Activated naive CD4-positive, alpha-beta T cell treated with anti-CD3 and anti-CD28 coated beads for 36 hours (primary cell): ENCODE measurements at regions of chr13 and their contacts with region 1.

Region 1: DNA sequence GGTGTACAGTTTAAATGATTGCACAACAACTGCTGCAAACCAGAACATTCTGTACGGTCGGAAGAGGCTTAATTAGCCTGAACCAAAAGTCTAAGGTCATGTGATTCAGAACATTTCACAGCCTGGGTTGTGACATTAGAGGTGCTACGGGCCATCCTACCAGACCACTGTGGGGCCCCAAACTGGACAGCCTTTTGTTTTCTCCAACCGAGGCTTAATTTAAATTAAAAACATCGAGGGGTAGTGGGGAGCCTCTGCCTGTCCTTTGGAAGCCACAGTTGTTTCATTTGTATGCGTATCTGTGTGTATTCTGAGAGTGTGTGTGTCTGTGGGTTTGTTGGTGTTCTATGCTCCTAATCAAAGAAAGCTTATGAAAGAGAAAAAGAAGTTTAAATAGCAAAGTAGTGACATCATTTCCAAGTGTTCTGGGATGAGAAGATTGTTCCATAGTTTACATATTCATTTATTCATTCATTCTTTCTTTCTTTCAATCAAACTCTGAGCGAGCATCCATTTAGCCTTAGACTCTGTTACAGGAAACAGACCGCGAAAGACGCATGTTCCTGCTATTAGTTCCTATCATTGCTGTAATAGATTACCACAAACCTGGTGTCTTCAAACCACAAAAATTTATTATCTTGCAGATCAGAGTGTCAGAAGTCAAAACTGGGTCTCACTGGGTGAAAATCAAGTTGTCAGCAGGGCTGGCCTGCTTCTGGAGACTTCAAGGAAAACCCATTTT is 444.8 kb downstream of the FOXO1 start:
- DNase-seq: peak; percentile 80
- H3K4me3 Mint-ChIP-seq: peak overlapping the region; percentile 25
- H3K27ac Mint-ChIP-seq: peak overlapping the region; percentile 92
- H3K4me1 Mint-ChIP-seq: peaks cover 69% of the 10 kb centered on the region
- H3K27me3 Mint-ChIP-seq: no peaks in the 10 kb centered on the region

Region 2: DNA sequence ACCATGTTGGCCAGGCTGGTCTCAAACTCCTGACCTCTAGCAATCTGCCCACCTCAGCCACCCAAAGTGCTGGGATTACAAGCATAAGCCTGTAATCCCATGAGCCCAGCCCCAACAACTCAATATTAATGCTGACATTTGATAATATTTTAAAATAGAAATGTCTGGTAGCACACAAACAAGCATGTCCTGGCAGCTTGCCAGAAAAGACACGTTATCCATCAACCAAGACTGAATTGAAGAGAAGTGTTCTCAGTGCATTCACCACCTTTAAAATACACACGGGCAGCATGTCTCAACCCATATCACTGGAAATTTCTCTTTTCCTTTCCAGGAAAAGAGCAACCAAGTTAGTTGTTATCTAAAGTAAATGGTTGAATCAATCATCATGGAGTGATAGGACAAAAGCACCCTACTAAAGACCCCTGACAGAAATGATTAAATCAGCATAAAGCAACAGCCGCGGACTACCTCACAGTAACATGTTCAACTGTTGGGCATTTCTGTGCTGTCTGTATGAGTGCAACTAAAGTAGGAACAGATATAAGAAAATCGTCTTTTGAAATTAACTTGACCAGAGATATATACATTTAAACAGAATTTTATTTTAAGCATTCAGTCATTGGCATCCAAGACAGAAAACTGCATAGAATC is 643.7 kb before region 1 on chr13:
- CTCF ChIA-PET with region 1: no interaction called
- intact Hi-C with region 1: no loop called
- DNase-seq: no peak
- H3K4me3 Mint-ChIP-seq: no peak overlapping the region
- H3K27ac Mint-ChIP-seq: no peak overlapping the region
- H3K4me1 Mint-ChIP-seq: no peaks in the 10 kb centered on the region
- H3K27me3 Mint-ChIP-seq: no peaks in the 10 kb centered on the region

Region 3: DNA sequence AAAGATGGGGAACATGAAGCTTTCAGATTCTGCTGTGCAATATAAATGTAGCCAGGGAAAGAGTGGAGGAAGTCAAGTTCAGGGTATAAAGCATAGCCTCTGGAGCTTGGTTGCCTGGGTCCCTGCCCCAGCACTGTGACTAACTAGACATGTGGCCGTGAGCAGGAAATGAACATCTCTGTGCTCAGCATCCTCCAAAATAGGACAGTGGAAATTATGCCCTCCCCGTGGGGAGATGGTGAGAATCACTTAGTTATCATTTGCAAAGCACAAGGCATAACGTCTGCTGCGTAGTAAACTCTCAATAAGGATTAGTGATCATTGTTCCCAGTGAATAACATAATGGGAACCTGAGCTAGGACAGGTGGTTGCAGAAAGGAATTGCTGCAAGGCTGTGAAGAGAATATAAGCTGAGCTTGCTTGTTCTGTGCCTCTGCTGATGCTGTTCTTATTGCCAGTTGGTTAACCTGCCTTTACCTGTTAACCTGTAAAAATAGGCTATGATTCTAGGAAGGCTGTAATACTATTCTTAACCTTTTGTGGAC is 125.2 kb before region 1 on chr13:
- CTCF ChIA-PET with region 1: no interaction called
- intact Hi-C with region 1: loop called (anchors 1 kb)
- DNase-seq: peak; percentile 75
- H3K4me3 Mint-ChIP-seq: no peak overlapping the region
- H3K27ac Mint-ChIP-seq: peak overlapping the region; percentile 20
- H3K4me1 Mint-ChIP-seq: peaks cover 30% of the 10 kb centered on the region
- H3K27me3 Mint-ChIP-seq: no peaks in the 10 kb centered on the region

Region 4: GRCh38 chr13:40149611-40150274 is 71.9 kb before region 1 on chr13:
- CTCF ChIA-PET with region 1: interaction called, 3 read pairs
- intact Hi-C with region 1: loop called (anchors 1 kb)
- DNase-seq: peak; percentile 37
- H3K4me3 Mint-ChIP-seq: no peak overlapping the region
- H3K27ac Mint-ChIP-seq: peak overlapping the region; percentile 52
- H3K4me1 Mint-ChIP-seq: peaks cover 73% of the 10 kb centered on the region
- H3K27me3 Mint-ChIP-seq: no peaks in the 10 kb centered on the region

Region 5: DNA sequence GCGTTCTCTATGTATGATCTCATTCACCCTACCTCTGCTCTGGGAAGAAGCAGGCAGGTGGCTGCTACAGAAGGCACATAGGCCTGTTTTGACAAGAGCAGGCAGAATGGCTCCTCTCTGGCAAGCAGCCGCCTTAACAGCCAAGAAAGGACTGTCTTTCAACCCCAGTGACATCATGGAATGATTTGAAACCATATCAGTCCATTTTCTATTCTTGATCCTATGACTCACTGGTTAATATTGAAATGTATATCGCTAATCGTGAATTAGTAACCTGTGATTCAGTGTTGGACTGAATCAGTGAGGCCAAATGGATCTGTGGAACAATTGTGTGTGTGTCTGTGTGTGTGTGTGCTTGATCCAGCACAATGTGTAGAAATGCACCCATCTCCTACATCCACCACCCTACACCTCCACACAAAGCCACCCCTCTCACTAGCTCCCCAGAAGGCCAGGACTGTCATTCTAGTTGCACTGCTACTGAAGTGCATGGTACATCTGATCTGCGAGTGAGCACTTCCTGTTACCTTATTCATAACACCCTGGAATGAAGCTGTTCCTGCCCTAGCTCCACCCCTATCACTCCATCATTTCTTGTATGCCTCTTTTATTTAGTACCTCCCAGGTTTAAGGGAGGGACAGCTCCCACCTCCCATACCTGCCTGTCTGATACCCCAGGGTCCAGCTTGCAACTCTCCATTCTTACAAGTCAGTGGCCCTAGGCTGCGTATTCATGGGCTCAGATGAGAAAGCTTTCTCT is 15.2 kb before region 1 on chr13:
- CTCF ChIA-PET with region 1: interaction called, 4 read pairs
- intact Hi-C with region 1: loop called (anchors 1 kb)
- DNase-seq: peak; percentile 74
- H3K4me3 Mint-ChIP-seq: peak overlapping the region; percentile 64
- H3K27ac Mint-ChIP-seq: peak overlapping the region; percentile 100
- H3K4me1 Mint-ChIP-seq: peaks cover 73% of the 10 kb centered on the region
- H3K27me3 Mint-ChIP-seq: no peaks in the 10 kb centered on the region

Region 6: DNA sequence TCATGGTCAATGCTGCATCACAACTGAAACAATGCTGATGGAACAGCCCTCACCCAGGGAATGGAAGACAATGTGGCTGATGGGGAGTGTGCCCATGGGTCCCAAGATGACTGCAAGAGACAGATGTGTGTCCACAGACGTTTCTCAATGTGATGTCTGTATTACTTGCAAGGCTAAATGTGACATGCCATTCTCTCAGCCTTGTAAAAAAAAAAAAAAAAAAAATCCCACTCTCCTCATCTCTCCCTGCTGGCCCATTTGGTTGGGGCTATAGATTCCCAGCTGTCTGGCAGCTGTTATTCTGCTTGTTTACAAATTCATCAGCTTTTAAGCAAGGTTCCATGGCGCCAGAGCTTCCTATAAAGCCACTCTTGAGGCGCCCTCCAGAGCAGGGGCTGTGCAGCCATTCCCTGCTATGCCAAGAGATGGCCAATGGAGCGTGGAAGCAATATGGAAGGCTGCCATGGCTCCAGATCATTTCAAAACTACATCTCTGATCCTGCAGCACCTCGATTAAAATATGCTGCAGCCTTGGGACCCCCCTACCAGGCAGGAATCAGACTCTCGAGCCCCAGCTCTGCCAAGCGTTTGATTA is 150.0 kb after region 1 on chr13:
- CTCF ChIA-PET with region 1: no interaction called
- intact Hi-C with region 1: loop called (anchors 5 kb)
- DNase-seq: no peak
- H3K4me3 Mint-ChIP-seq: no peak overlapping the region
- H3K27ac Mint-ChIP-seq: no peak overlapping the region
- H3K4me1 Mint-ChIP-seq: peaks cover 49% of the 10 kb centered on the region
- H3K27me3 Mint-ChIP-seq: no peaks in the 10 kb centered on the region

Region 7: DNA sequence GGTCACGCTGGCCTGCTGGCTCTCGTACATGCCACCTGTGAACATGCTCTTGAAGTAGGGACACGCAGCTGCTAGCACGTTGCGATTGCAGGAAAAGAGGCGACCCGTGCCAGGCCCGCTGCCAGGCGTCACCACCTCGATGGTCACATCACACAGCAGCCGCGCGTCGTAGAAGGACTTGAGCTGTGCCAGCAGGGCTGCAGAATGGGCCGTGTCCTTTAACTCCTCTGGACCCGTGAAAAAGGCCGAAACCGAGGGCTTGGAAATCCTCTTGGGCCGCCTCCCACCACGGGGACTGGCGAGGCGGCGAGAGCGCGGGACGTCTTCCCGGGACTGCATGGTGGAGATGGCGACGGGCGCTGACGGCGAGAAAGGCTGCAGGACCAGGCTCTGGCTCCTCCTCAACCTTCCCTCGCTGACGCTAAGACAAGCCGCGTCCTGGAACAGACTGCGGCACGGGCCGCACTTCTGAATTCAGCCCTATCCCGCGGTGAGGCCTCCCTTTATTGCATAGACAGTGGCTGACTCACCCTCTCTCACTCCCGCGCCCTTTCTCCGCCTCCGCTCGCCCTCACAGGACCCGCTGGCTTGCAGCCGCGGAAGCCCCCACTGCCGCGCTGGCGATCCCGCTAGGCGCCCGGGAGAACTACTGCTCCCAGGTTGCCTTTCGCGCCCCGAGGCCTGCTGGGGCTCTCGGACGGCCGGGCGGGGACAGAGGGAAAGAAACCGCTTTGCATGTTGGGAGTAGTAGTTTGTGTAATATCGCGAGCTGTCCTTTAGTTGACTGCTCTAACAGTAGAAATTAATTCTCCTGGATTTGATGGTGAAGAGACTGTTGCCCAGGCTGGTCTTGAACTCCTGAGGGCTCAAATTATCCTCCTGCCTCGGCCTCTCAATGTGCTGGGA is 972.5 kb after region 1 on chr13 and contains the start of gene KBTBD7:
- CTCF ChIA-PET with region 1: no interaction called
- intact Hi-C with region 1: no loop called
- DNase-seq: peak; percentile 95
- H3K4me3 Mint-ChIP-seq: peak within 1 kb of the TSS; percentile 90
- H3K27ac Mint-ChIP-seq: peak within 1 kb of the TSS; percentile 89
- H3K4me1 Mint-ChIP-seq: peaks cover 37% of the 10 kb centered on the region
- H3K27me3 Mint-ChIP-seq: no peaks in the 10 kb centered on the region
- total RNA-seq, gene KBTBD7: 4.2 to 4.3 TPM

Region 8: GRCh38 chr13:41398494-41399170 is 1177.0 kb after region 1 on chr13:
- CTCF ChIA-PET with region 1: no interaction called
- intact Hi-C with region 1: no loop called
- DNase-seq: peak; percentile 14
- H3K4me3 Mint-ChIP-seq: no peak overlapping the region
- H3K27ac Mint-ChIP-seq: no peak overlapping the region
- H3K4me1 Mint-ChIP-seq: no peaks in the 10 kb centered on the region
- H3K27me3 Mint-ChIP-seq: no peaks in the 10 kb centered on the region